ENCODE measurements at regions of chr17 and their contacts with region 1.

Region 1: DNA sequence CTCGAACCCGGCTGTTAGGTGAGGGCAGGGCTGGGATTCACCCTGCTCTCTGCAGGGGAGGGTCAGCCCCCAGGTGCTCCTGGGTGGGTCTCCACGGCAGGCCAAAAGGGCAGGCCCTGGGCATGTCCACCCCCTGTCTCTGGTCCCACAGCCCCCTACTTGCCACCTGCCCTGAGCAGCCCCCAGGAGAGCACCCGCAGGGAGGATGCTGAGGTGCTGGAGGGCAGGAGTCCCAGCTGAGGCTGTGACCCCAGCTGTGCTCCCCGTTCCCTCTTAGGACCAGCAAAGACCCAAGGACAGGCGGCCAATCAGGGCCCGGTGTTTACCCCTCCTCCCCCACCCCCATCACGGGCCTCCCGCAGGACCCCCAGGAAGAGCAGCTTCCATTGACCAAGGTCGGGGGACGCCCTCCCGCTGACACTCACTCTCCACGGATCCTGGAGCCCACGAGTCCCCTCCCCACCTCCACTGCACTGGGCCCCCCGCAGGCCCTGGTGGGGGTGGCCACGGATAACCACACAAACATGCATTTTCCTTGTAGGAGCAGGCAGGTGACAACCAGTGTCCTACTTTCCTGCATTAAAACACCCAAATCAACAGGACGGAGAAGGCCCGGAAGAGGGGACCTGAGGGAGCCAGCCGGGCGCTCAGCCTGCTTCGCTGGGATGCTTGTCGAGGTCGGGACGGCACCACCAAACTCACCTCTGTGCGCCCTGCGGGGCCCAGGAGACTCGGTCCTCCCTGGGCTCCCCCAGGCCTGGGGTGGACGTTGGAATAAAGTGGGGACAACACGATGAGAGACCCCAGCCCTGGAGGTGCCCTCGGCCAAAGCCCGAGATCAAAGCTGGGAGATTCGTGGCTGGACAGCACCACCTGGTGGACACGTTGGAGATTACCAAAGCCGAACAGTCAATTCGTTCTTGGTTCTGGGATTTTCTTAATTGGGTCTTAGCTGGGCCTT is 22.5 kb upstream of the ENPP7 start:
- DNase-seq: peak; percentile 25
- H3K4me3 ChIP-seq: no peak overlapping the region
- H3K27ac ChIP-seq: no peak overlapping the region
- H3K4me1 ChIP-seq: no peaks in the 10 kb centered on the region
- H3K27me3 ChIP-seq: no peaks in the 10 kb centered on the region
- CTCF ChIP-seq: peak; percentile 61 to 73

Region 2: GRCh38 chr17:79065105-79065670 is 643.0 kb before region 1 on chr17:
- CTCF ChIA-PET with region 1: no interaction called
- dilution Hi-C with region 1: no loop called
- in situ Hi-C with region 1: no loop called
- intact Hi-C with region 1: loop called (anchors 10 kb)
- DNase-seq: no peak
- H3K4me3 ChIP-seq: no peak overlapping the region
- H3K27ac ChIP-seq: no peak overlapping the region
- H3K4me1 ChIP-seq: no peaks in the 10 kb centered on the region
- H3K27me3 ChIP-seq: no peaks in the 10 kb centered on the region
- CTCF ChIP-seq: peak; percentile 39 to 52

Region 3: DNA sequence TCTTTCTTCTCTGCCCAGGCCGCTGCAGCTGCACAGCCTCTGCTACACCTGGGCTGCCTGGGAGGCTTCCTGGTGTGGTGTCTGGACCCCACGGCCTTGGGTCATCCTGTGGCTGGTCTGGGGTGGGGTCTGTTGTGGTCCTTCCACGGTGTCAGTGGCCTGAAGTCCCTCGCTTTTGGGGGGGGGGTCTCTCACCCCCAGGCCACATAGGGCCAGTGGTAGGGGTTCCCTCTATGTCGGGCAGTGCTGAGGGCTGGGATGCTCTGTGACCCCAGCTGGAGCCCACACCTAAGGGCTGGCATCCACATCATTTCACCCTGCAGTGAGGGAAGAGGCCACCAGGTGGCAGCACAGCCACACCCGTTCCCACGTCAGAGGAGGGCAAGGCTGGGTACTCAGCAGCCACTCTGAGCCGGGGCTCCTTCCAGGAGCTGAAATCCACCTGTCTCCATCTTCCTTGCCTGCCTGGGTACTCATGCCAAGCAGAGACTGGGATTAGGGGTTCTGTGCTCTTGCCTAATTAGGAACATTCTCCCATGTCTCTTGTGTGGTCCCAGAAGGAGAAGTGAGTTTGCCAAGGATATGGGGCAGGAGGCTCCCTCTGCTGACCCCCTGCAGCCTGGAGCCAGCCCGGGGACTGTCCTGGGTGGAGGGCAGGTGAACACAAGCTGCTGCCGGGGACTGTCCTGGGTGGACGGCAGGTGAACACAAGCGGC is 620.6 kb before region 1 on chr17:
- CTCF ChIA-PET with region 1: no interaction called
- dilution Hi-C with region 1: no loop called
- in situ Hi-C with region 1: no loop called
- intact Hi-C with region 1: loop called (anchors 5 kb)
- DNase-seq: peak; percentile 21
- H3K4me3 ChIP-seq: no peak overlapping the region
- H3K27ac ChIP-seq: no peak overlapping the region
- H3K4me1 ChIP-seq: no peaks in the 10 kb centered on the region
- H3K27me3 ChIP-seq: no peaks in the 10 kb centered on the region
- CTCF ChIP-seq: peak; percentile 88

Region 4: GRCh38 chr17:79400989-79401703 is 307.1 kb before region 1 on chr17:
- CTCF ChIA-PET with region 1: no interaction called
- dilution Hi-C with region 1: no loop called
- in situ Hi-C with region 1: loop called in 1 of 2 experiments (anchors 10 kb)
- intact Hi-C with region 1: loop called (anchors 1 kb)
- DNase-seq: peak; percentile 25
- H3K4me3 ChIP-seq: peak overlapping the region in 1 of 3 experiments; percentile 23
- H3K27ac ChIP-seq: no peak overlapping the region
- H3K4me1 ChIP-seq: no peaks in the 10 kb centered on the region
- H3K27me3 ChIP-seq: peaks cover 5% of the 10 kb centered on the region
- CTCF ChIP-seq: peak; percentile 79 to 91

Region 5: DNA sequence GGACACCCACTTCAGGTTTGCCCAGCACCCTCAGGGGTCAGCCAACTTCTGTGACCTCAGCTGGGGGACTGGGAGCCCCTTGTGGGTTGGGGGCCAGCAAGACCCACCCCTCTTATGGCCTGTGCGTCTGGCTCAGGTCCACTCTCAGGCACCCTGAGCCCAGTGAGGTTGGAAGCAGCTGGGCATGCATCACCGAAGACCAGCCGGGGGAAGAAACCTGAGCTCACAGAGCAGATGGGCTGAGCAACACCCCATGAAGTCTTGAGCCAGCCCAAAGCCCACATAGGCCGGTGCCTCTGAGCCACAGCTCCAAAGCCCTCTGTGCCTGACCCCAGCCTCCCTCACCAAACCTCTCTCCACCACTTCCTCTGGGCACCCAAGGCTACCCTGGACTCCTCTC is 264.0 kb before region 1 on chr17:
- CTCF ChIA-PET with region 1: no interaction called
- dilution Hi-C with region 1: no loop called
- in situ Hi-C with region 1: no loop called
- intact Hi-C with region 1: no loop called
- DNase-seq: no peak
- H3K4me3 ChIP-seq: no peak overlapping the region
- H3K27ac ChIP-seq: no peak overlapping the region
- H3K4me1 ChIP-seq: no peaks in the 10 kb centered on the region
- H3K27me3 ChIP-seq: no peaks in the 10 kb centered on the region
- CTCF ChIP-seq: no peak

Region 6: DNA sequence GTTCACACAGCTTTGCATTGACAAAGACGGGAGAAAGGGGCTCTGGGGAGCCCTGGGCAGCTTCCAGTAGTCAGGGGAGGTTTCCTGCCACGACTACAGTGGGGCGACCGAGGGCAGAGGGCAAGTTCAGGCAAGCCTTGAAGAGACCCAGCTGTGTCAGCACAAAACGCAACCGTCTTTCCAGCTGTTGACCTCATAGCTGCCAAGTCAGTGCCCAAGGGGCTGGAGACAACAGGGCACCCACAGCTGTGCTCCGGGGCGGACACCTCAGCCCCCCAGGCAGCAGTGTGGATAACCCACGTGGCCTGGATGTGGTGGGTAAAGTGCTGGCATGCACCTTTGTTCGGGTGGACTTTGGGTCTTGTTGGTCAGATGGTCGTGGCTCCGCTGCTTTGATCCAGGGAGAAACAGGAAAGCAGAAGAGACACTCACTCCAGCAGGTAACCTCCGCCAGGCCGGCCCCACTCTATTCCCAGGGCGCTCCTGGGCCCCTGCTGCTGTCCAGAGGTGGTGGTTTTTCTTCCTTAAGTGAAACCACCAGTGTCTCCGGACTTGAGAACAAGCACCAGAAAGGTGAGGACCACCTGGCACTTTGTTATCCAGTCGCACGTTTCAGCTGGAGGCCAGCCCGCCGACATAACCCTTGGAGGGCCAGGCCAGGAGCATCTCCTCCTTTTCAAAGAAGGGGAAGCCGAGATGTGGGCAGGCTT is 52.1 kb after region 1 on chr17:
- CTCF ChIA-PET with region 1: no interaction called
- dilution Hi-C with region 1: no loop called
- in situ Hi-C with region 1: no loop called
- intact Hi-C with region 1: no loop called
- DNase-seq: no peak
- H3K4me3 ChIP-seq: no peak overlapping the region
- H3K27ac ChIP-seq: no peak overlapping the region
- H3K4me1 ChIP-seq: peaks cover 6% of the 10 kb centered on the region
- H3K27me3 ChIP-seq: no peaks in the 10 kb centered on the region
- CTCF ChIP-seq: no peak

Region 7: DNA sequence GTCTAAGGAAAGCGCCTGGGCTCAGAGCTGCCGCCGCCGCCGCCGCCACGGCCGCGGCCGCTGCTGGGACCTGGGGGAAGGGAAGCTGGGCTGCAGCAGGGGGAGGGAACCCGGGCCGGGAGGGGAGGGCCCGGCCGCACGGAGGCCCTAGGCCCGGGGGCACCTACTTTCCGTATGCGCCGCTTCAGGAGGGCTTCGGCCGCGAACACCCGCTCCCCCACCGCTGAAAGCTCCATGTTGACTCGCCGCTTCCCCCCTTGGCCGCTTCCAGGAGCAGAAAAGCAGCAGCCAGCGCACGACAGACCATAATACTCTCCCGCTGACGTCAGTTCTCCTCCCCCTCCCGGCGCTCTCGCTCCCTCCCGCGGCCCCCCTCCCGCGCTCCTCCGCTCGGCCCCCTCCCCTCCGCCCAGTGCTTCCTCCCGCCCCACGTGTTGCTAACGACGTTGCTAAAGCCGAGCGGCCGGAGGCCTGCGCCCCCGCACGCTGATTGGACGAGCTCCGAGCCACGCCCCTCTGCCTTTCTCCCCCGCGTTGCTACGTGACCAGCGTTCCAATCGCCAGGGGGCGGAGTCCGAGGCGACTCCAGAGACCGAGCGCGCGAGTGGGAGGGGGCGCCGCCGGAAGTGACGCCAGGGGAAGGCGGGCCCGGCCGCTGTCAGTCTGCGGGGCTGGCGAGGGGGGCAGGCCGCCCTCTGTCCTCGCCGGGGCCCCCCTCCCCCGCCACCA is 88.7 kb after region 1 on chr17 and contains the start of gene CBX8:
- CTCF ChIA-PET with region 1: no interaction called
- dilution Hi-C with region 1: no loop called
- in situ Hi-C with region 1: no loop called
- intact Hi-C with region 1: no loop called
- DNase-seq: peak; percentile 99
- H3K4me3 ChIP-seq: peak within 1 kb of the TSS; percentile 67 to 75 (median 73)
- H3K27ac ChIP-seq: peak within 1 kb of the TSS; percentile 87
- H3K4me1 ChIP-seq: peaks cover 39% of the 10 kb centered on the region
- H3K27me3 ChIP-seq: peaks cover 31% of the 10 kb centered on the region
- CTCF ChIP-seq: peak in 1 of 2 donors; percentile 18
- total RNA-seq, gene CBX8: 4.5 to 5.4 TPM

Measured in mammary epithelial cell (primary cell).